ENCODE measurements at regions of chr22 and their contacts with region 1.

Region 1: GRCh38 chr22:36966851-36967540 is 52.3 kb downstream of the TST start:
- DNase-seq: no peak
- ATAC-seq: no peak
- H3K4me3 ChIP-seq: no peak overlapping the region
- H3K27ac ChIP-seq: no peak overlapping the region
- H3K4me1 ChIP-seq: no peaks in the 10 kb centered on the region
- CTCF ChIP-seq: no peak
- EP300 ChIP-seq: no peak
- POLR2A ChIP-seq: no peak
- RAD21 ChIP-seq: no peak

Region 2: GRCh38 chr22:36977947-36978660 is 11.1 kb after region 1 on chr22:
- CTCF ChIA-PET with region 1: interaction called, 53 read pairs
- POLR2A ChIA-PET with region 1: no interaction called
- DNase-seq: peak; percentile 82 to 84
- ATAC-seq: peak; percentile 87 to 88
- H3K4me3 ChIP-seq: peak overlapping the region; percentile 46
- H3K27ac ChIP-seq: peak overlapping the region; percentile 63 to 86; a peak in 5 of 6 replicates
- H3K4me1 ChIP-seq: no peaks in the 10 kb centered on the region
- CTCF ChIP-seq: peak; percentile 67
- EP300 ChIP-seq: no peak
- POLR2A ChIP-seq: no peak
- RAD21 ChIP-seq: peak; percentile 78 to 79